MCF 10A (cell line): ENCODE measurements at regions of chr10 and their contacts with region 1.

Region 1: DNA sequence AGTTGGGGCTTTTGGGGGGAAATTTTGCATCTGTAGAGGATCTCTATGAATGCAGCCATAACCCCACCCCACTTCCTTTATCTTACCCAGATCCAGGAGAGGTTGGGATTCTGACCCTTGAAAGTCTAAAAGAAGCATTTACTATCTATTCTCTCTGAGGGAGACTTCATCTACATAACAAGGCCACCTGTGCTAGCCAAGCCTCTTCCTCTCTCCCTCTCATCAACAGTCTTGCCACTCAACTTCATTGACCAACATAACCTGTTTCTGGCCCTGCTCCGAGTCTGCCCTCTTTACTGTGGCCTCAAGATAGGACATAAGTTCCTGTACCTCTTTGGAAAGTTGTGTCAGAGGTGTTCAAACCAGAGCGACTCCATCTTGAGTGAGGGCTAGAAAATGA is 19.4 kb downstream of the TUBAL3 start:
- DNase-seq: no peak
- H3K4me3 Mint-ChIP-seq: no peak overlapping the region
- H3K27ac Mint-ChIP-seq: no peak overlapping the region
- H3K4me1 Mint-ChIP-seq: no peaks in the 10 kb centered on the region
- H3K27me3 Mint-ChIP-seq: no peaks in the 10 kb centered on the region
- CTCF ChIP-seq: no peak

Region 2: DNA sequence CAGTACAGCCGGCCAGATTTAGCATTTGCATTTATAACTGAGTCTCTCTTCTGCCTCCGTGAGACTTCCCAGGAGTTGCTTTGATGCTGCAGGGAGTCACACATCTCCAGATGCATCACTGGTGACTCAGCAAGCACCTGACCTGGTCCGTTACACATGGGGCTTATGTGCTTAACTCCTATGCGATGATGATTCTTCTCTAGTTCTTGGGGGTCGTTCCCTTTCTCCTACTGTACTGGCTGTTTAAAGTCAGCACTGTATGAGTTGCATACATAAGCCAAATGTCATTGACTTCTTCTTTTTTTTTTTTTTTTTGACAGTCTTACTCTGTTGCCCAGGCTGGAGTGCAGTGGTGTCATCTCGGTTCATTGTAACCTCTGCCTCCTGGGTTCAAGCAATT is 572.2 kb before region 1 on chr10:
- CTCF ChIA-PET with region 1: interaction called, 9 read pairs
- POLR2A ChIA-PET with region 1: no interaction called
- intact Hi-C with region 1: loop called (anchors 1 kb)
- DNase-seq: peak; percentile 76
- H3K4me3 Mint-ChIP-seq: no peak overlapping the region
- H3K27ac Mint-ChIP-seq: no peak overlapping the region
- H3K4me1 Mint-ChIP-seq: peaks cover 18% of the 10 kb centered on the region
- H3K27me3 Mint-ChIP-seq: no peaks in the 10 kb centered on the region
- CTCF ChIP-seq: no peak

Region 3: GRCh38 chr10:5014936-5015335 is 370.3 kb before region 1 on chr10:
- CTCF ChIA-PET with region 1: interaction called, 4 read pairs
- POLR2A ChIA-PET with region 1: no interaction called
- intact Hi-C with region 1: loop called (anchors 1 kb)
- DNase-seq: peak; percentile 45
- H3K4me3 Mint-ChIP-seq: no peak overlapping the region
- H3K27ac Mint-ChIP-seq: no peak overlapping the region
- H3K4me1 Mint-ChIP-seq: peaks cover 28% of the 10 kb centered on the region
- H3K27me3 Mint-ChIP-seq: no peaks in the 10 kb centered on the region
- CTCF ChIP-seq: peak; percentile 30

Region 4: DNA sequence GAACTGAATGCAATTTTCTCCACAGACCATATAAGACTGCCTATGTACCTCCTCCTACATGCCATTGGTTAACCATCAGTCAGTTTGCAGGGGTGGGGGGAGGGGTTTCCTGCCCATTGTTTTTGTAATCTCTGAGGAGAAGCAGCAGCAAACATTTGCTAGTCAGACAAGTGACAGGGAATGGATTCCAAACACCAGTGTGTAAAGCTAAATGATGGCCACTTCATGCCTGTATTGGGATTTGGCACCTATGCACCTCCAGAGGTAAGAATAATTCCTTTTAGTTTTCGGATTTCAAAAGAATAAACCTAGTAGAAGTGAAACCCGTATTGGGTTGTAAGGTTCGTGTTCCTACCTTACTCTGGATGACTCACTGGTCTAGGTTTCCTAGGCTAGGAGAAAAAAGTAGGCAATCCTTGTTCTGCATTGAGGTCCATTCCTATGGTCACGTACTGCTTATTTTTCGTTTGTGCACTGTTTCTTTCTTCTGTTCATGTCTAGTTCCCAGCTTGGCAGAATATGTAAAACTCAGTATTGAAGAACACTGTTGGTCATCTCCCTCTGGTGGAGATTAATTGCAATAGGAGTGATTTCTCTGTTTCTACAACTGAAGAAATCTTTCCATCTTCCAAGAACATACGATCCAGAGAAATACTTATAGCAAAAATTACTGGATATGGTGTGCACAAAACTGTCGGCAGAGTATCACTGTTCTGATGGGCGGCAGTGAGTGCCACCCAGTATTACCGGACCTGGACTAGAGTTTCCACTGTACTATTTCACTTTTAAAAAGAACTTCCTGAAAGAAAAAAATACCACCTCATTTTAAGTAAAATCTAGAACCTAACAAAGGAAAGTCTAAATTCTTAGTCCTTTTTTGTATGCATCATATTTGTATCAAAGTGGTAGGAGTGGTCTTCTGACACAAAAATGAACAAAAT is 290.7 kb before region 1 on chr10 and contains the start of gene AKR1C3:
- CTCF ChIA-PET with region 1: interaction called, 4 read pairs
- POLR2A ChIA-PET with region 1: interaction called, 4 read pairs
- intact Hi-C with region 1: loop called (anchors 1 kb)
- DNase-seq: peak; percentile 84
- H3K4me3 Mint-ChIP-seq: peak within 1 kb of the TSS; percentile 87
- H3K27ac Mint-ChIP-seq: peak within 1 kb of the TSS; percentile 88
- H3K4me1 Mint-ChIP-seq: peaks cover 20% of the 10 kb centered on the region
- H3K27me3 Mint-ChIP-seq: no peaks in the 10 kb centered on the region
- CTCF ChIP-seq: peak; percentile 43
- total RNA-seq, gene AKR1C3: 22.0 and 22.9 TPM in 2 replicates

Region 5: GRCh38 chr10:5396556-5397300 is 11.5 kb after region 1 on chr10:
- CTCF ChIA-PET with region 1: interaction called, 13 read pairs
- POLR2A ChIA-PET with region 1: interaction called, 3 read pairs
- intact Hi-C with region 1: no loop called
- DNase-seq: no peak
- H3K4me3 Mint-ChIP-seq: no peak overlapping the region
- H3K27ac Mint-ChIP-seq: no peak overlapping the region
- H3K4me1 Mint-ChIP-seq: no peaks in the 10 kb centered on the region
- H3K27me3 Mint-ChIP-seq: no peaks in the 10 kb centered on the region
- CTCF ChIP-seq: no peak

Region 6: DNA sequence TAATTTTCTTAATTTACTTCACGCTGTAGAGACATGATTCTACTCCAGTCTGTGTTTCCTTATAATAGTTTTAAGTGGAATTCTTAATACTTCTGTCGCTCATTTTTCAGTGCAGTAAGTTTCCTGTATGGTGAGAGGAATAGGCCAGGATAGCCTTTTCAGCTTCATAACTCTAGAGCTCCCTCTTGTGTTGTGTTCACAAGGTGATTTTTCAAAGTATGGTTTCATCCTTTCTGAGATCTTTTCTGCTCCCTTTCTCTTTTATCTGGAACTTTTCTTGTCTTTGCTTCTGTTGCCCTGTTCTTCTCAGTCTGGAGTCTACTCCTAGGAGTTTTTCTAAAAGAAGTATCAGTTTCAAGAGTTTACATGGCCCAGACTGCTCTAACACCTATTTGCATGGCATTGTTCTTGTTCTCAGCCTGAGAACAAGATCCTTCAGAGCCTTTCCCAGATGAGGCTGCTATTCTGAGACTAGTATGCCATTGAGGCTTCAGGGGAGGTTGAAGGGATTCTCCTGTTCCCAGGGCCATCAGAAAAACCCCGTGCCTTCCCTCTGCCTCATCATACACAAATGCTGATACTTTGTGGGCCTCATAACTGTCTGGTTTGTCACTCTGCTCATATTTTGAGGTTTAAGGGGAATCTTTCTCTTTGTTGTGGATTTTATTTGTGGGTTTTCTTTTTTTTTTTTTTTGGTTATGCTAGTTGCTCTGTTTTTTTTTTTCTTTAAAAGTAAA is 49.0 kb after region 1 on chr10:
- CTCF ChIA-PET with region 1: interaction called, 17 read pairs
- POLR2A ChIA-PET with region 1: no interaction called
- intact Hi-C with region 1: no loop called
- DNase-seq: peak; percentile 64
- H3K4me3 Mint-ChIP-seq: peak overlapping the region; percentile 22
- H3K27ac Mint-ChIP-seq: peak overlapping the region; percentile 75
- H3K4me1 Mint-ChIP-seq: peaks cover 25% of the 10 kb centered on the region
- H3K27me3 Mint-ChIP-seq: no peaks in the 10 kb centered on the region
- CTCF ChIP-seq: peak; percentile 80